ENCODE measurements at regions of chr1 and their contacts with region 1.

Region 1: GRCh38 chr1:26284597-26285360 is 4.9 kb downstream of the SH3BGRL3 start:
- DNase-seq: peak; percentile 99
- ATAC-seq: peak; percentile 66
- H3K4me3 Mint-ChIP-seq: peak overlapping the region; percentile 61
- H3K27ac Mint-ChIP-seq: peak overlapping the region; percentile 99
- H3K4me1 Mint-ChIP-seq: peaks cover 87% of the 10 kb centered on the region
- H3K27me3 Mint-ChIP-seq: no peaks in the 10 kb centered on the region

Region 2: DNA sequence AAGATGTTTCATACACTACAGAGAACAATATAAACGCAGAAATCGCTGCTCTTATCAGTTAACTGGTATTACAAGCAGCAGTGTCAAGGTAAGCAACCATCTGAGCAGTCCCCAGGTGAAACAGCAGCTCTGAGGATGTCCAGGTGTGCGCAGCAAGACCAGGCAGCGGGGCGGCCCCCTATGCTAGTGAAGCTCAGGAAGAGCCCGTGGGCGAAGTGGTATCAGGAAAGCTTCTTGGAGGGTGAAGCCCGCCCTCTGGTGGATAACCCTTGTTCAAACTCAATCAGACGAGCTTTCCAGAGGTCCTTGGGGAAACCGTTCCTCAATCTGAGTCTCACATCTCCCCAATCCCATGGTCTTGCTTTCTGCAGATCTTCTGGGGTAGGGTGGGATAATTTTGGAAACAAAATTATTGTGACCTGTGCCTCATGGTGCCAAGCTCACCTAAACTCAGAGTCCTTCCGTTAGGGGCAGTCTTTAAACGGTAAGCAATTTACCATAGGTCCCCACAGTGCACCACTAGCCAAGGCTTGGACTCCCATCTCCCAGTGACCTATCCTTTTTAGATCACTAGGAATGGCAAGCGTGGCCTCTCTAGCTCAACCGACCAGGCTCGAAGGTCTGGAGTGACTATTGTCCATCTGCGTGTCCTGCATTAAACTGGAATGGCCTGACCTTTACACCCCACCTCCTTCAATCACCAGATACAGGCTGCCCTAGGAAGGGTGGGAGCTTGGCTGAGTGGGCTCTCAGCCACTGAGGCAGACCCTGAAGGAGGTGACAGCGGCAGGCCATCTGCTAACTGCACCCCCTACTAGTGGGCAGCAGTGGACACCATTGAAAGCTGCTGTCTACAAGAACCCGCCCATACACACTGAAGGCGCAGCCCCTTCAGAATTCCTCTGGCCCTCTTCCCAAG is 139.5 kb before region 1 on chr1:
- CTCF ChIA-PET with region 1: no interaction called
- POLR2A ChIA-PET with region 1: no interaction called
- intact Hi-C with region 1: no loop called
- DNase-seq: peak; percentile 89
- ATAC-seq: peak; percentile 89
- H3K4me3 Mint-ChIP-seq: no peak overlapping the region
- H3K27ac Mint-ChIP-seq: no peak overlapping the region
- H3K4me1 Mint-ChIP-seq: peaks cover 6% of the 10 kb centered on the region
- H3K27me3 Mint-ChIP-seq: peaks cover 2% of the 10 kb centered on the region

Region 3: DNA sequence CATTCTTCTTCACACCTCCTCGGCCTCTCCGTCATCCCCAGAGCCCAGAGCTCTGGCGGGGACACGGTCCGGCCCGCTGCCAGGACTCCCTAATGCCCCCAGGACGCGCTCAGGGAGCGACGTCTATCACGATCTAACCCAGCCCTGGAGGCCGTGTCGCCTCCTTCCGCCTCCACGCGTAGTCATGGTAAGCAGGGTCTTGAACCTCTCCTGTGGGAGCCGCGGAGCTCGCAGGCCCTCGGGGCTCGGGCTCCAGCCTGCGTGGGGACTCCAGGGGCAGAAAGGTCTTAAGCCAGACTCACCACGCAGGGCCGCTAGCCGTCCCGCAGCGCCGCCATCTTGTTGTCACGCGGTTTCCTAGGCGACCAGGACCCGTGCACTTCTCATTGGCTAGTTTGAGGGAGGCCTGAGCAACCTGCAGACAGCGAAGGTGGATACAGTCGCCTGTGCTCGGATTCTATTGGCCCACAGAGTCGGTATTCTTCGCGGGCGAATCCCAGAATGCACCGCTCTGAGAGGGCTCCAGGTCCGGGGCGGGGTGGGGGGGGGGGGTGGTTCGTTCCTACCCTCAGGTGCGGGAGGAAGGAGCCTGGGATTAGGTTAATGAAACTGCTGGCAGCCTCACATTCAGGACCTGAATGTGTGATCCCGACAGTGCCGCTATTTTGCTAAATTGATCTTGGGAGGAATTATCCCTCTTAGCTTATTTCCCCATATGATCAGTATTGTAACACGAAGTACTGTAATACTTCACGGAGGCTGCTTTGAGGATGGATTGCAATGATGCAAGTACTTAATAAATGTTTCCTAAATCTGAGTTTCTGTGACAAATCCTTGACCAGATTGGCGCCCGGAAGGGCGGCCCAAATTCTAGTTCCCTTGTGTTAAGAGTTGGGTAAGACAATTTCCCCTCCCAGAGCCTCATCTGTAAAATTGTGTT is 21.8 kb after region 1 on chr1 and contains the start of gene UBXN11:
- CTCF ChIA-PET with region 1: interaction called, 75 read pairs
- POLR2A ChIA-PET with region 1: interaction called, 7 read pairs
- intact Hi-C with region 1: loop called (anchors 1 kb)
- DNase-seq: peak; percentile 96
- ATAC-seq: peak; percentile 94
- H3K4me3 Mint-ChIP-seq: peak within 1 kb of the TSS; percentile 90
- H3K27ac Mint-ChIP-seq: peak within 1 kb of the TSS; percentile 95
- H3K4me1 Mint-ChIP-seq: peaks cover 32% of the 10 kb centered on the region
- H3K27me3 Mint-ChIP-seq: no peaks in the 10 kb centered on the region
- total RNA-seq, gene UBXN11: 19.4 to 22.2 TPM